ENCODE measurements at regions of chr3 and their contacts with region 1.

Region 1: DNA sequence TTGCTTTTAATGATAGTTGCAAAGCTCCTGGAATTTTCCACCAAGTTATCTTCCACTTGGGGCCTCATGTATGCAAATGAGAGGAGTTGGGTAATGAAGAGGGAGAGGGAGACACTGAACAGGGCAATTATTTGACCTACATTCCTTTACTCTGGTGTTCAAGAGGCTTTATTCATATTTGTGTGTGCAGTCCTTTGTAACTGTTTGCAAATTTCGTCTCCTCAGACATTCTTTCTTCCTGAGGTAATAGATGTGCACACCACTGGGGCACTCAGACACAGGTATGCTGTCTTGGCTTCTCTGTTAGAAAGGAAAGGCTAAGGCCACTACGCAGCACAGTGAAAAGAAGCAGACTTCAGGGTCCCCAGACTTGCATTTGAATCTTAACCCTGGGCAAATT is 189.7 kb upstream of the IL12A start:
- DNase-seq: peak; percentile 29
- H3K4me3 ChIP-seq: no peak overlapping the region
- H3K27me3 ChIP-seq: no peaks in the 10 kb centered on the region
- CTCF ChIP-seq: no peak

Region 2: GRCh38 chr3:159401069-159401468 is 397.9 kb before region 1 on chr3:
- CTCF ChIA-PET with region 1: no interaction called
- POLR2A ChIA-PET with region 1: no interaction called
- DNase-seq: no peak
- H3K4me3 ChIP-seq: no peak overlapping the region
- H3K27me3 ChIP-seq: no peaks in the 10 kb centered on the region
- CTCF ChIP-seq: no peak

Region 3: DNA sequence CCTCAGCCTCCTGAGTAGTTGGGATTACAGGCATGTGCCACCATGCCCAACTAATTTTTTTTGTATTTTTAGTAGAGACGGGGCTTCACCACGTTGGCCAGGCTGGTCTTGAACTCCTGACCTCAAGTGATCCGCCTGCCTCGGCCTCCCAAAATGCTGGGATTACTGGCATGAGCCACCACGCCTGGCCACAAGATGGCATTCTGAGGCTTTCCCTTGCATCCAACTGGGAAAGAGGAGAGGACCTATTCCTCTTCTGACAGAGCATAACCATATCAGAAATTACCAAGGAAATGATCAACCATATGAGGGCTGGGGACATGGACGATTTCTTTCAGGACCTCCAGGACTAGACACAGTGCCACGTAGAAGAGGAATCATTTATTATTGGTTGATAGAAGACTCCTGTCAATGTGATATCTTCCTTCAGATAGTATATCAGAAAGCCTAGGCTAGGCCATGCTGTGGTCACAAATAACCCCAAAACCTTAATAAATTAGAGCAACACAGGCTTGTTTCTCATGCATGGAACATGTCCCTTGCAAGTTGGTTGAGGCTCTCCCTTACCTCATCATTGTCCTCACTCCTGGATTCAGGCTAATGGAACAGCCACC is 182.6 kb before region 1 on chr3:
- CTCF ChIA-PET with region 1: interaction called, 78 read pairs
- POLR2A ChIA-PET with region 1: no interaction called
- DNase-seq: no peak
- H3K4me3 ChIP-seq: no peak overlapping the region
- H3K27me3 ChIP-seq: no peaks in the 10 kb centered on the region
- CTCF ChIP-seq: peak; percentile 72

Region 4: DNA sequence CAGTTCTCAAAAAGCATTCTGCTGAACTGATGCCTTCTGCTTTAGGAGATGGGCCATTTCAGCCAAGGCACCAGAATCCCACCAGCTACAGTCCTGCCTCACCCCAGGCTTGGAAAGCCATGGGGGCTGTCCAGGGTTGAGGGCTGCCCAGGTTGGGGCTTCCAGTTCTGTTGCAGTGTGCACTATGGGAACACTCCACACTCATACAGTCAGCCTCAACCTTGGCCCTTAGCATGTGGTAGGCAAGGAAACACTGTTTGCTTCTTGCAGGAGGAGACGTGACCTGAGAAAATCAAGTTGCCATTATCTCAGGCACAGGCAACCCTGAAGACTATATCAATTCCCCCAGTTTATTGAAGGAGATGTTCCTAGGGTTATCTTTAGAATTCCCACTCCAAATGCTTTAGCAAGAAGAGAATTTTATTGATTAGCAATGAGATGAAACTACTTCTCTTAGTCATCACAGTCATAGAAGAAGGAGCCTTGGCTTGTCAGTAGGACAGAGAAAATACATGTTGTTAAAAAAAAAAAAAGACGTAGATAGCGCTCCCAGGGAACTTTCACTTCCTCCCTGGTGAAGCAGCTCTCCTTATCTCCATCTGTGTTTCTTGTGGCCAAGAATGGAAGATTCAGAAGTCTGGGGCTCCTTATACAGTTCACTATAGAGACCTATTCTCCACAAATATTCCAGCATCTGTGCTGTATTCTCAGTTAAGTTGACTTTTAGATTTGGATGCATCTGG is 151.4 kb after region 1 on chr3:
- CTCF ChIA-PET with region 1: no interaction called
- POLR2A ChIA-PET with region 1: no interaction called
- DNase-seq: no peak
- H3K4me3 ChIP-seq: no peak overlapping the region
- H3K27me3 ChIP-seq: no peaks in the 10 kb centered on the region
- CTCF ChIP-seq: no peak